MCF 10A (cell line): ENCODE measurements at regions of chr3 and their contacts with region 1.

Region 1: GRCh38 chr3:141452036-141452435 is 34.8 kb upstream of the RASA2 start:
- DNase-seq: peak; percentile 56
- H3K4me3 Mint-ChIP-seq: no peak overlapping the region
- H3K27ac Mint-ChIP-seq: no peak overlapping the region
- H3K4me1 Mint-ChIP-seq: peaks cover 26% of the 10 kb centered on the region
- H3K27me3 Mint-ChIP-seq: no peaks in the 10 kb centered on the region
- CTCF ChIP-seq: peak; percentile 50

Region 2: DNA sequence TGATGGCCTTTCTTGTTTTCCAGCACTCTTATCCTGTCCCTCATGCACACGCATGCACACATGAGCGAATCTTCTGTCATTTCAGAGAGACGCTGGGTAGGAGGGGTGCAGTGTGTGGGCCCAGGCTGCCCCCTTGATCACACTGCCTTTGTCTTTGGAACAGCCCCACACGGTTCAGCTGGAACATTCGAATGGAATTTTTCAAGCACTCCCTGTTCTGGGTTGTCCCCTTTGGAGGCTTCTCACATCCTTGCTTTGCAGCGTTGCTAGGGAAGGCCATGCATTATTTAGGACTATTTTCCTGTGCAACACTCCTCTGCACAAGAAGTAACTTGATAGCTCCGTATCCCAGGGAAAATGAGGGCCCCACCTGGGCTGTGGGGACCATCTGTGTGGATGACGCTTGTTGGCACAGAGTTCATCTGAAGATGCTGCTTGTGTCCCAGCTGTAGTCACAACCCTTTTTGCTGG is 322.5 kb before region 1 on chr3:
- CTCF ChIA-PET with region 1: no interaction called
- POLR2A ChIA-PET with region 1: no interaction called
- intact Hi-C with region 1: no loop called
- DNase-seq: no peak
- H3K4me3 Mint-ChIP-seq: no peak overlapping the region
- H3K27ac Mint-ChIP-seq: no peak overlapping the region
- H3K4me1 Mint-ChIP-seq: no peaks in the 10 kb centered on the region
- H3K27me3 Mint-ChIP-seq: peaks cover 18% of the 10 kb centered on the region
- CTCF ChIP-seq: no peak

Region 3: GRCh38 chr3:141294848-141295247 is 157.2 kb before region 1 on chr3:
- CTCF ChIA-PET with region 1: interaction called, 392 read pairs
- POLR2A ChIA-PET with region 1: no interaction called
- intact Hi-C with region 1: no loop called
- DNase-seq: no peak
- H3K4me3 Mint-ChIP-seq: peak overlapping the region; percentile 73
- H3K27ac Mint-ChIP-seq: peak overlapping the region; percentile 85
- H3K4me1 Mint-ChIP-seq: peaks cover 6% of the 10 kb centered on the region
- H3K27me3 Mint-ChIP-seq: no peaks in the 10 kb centered on the region
- CTCF ChIP-seq: no peak

Region 4: DNA sequence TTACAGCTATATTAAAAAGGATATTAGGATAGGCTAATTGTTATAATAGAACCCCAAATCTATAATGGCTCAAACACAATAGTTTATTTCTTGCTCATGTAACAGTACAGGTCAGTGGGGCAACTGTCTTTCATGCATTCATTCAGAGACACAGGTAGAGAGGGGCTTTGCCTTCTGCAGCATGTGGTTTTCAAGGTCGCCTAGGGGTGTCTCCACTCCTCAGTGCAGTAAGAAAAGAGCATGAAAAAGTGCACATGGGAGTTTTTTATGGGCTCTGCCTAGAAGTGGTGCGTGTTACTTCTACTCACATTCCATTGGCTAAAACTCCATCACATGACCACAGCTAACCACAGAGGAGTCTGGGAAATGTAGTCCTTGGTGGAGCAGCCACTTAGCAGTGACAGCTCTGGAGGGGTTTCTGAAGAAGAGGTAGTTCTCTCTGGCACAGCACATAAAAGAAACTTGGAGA is 81.9 kb before region 1 on chr3:
- CTCF ChIA-PET with region 1: interaction called, 13 read pairs
- POLR2A ChIA-PET with region 1: interaction called, 8 read pairs
- intact Hi-C with region 1: no loop called
- DNase-seq: peak; percentile 93
- H3K4me3 Mint-ChIP-seq: peak overlapping the region; percentile 73
- H3K27ac Mint-ChIP-seq: peak overlapping the region; percentile 98
- H3K4me1 Mint-ChIP-seq: peaks cover 56% of the 10 kb centered on the region
- H3K27me3 Mint-ChIP-seq: no peaks in the 10 kb centered on the region
- CTCF ChIP-seq: no peak

Region 5: GRCh38 chr3:141386611-141387111 is 65.4 kb before region 1 on chr3:
- CTCF ChIA-PET with region 1: interaction called, 10 read pairs
- POLR2A ChIA-PET with region 1: no interaction called
- intact Hi-C with region 1: no loop called
- DNase-seq: no peak
- H3K4me3 Mint-ChIP-seq: peak overlapping the region; percentile 28
- H3K27ac Mint-ChIP-seq: peak overlapping the region; percentile 73
- H3K4me1 Mint-ChIP-seq: peaks cover 46% of the 10 kb centered on the region
- H3K27me3 Mint-ChIP-seq: no peaks in the 10 kb centered on the region
- CTCF ChIP-seq: no peak

Region 6: DNA sequence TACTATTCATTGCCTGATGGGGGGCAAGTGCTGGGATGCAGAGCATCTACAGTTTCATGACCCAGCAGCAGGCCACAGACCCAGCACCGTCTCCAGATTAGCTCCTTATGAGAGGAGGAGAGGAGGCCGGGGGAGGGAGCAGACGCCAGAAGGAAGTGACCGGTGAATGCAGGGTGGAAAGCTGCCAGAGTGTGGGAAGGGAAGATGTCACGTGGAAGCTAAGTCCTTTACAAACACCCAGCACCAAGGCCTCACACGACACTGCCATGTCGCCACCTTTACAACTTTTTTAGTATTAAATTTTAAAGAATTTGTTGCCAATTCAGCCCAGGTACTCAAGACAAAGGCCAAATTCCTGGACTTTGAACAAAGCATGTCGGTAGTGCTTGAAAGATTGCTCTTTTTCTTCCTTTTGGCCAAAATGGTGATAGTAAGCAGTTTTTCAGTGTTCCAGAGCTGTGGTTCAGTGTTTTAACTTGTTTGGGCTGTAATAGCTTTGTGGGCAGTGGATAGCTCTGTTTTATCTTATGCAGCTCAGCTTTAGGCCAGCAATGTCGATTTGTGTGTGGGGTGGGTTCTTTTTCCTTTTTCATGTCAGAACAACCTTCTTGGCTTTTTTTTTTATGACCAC is 25.5 kb before region 1 on chr3:
- CTCF ChIA-PET with region 1: interaction called, 22 read pairs
- POLR2A ChIA-PET with region 1: interaction called, 4 read pairs
- intact Hi-C with region 1: no loop called
- DNase-seq: peak; percentile 36
- H3K4me3 Mint-ChIP-seq: peak overlapping the region; percentile 9
- H3K27ac Mint-ChIP-seq: peak overlapping the region; percentile 55
- H3K4me1 Mint-ChIP-seq: peaks cover 9% of the 10 kb centered on the region
- H3K27me3 Mint-ChIP-seq: no peaks in the 10 kb centered on the region
- CTCF ChIP-seq: no peak